PC-9 (cell line): ENCODE measurements at regions of chr6 and their contacts with region 1.

Region 1: DNA sequence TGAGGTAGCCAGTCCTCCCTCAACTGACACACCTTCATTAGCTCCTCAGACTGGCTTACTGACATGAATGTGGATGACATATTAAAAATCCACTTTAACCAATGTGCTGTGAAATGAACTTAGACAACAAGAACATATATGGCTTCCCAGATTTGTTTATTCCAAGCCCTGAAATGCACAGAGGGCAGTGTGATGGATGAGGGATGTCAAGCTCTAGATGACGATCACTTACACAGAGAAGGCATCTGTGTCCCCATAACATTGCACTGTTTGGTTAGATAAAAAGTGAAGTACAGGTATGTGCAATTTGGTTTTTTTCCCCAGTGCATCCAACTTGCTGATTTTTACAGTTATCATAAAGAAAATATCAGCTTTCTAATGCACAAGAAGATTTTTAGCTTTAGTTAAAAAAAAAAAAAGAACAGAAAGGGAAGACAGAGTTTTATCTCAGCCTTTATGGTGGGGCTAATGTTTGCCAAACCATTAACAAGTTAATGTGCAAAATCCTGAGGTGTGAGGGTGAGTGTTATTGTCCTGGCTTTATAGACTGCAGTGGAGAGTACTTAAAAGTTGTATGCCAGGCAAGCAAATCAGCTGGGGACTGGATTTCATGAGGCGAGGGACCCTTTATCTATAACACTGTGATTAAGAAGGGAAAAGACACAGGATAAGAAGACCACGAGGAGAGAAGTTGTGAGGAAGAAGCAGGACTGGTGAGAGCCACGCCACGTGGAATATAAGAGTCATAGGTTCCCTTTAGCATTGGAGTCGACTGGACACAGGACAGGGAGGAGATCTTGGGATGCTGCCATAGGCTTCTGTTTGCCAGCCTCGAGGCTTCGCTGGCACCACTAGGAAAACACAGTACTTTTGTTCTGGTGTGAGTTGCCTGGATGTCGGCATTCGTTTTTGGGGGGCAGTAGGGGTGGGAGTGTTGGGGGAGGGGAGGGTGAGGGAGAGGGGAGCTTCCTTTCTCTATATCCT is 90.0 kb upstream of the BACH2 start:
- DNase-seq: no peak
- H3K4me3 ChIP-seq: no peak overlapping the region
- H3K27ac ChIP-seq: no peak overlapping the region
- H3K4me1 ChIP-seq: no peaks in the 10 kb centered on the region
- H3K27me3 ChIP-seq: no peaks in the 10 kb centered on the region
- CTCF ChIP-seq: no peak

Region 2: GRCh38 chr6:90274451-90275030 is 112.2 kb before region 1 on chr6:
- CTCF ChIA-PET with region 1: no interaction called
- POLR2A ChIA-PET with region 1: no interaction called
- intact Hi-C with region 1: no loop called
- DNase-seq: no peak
- H3K4me3 ChIP-seq: no peak overlapping the region
- H3K27ac ChIP-seq: no peak overlapping the region
- H3K4me1 ChIP-seq: no peaks in the 10 kb centered on the region
- H3K27me3 ChIP-seq: no peaks in the 10 kb centered on the region
- CTCF ChIP-seq: no peak

Region 3: DNA sequence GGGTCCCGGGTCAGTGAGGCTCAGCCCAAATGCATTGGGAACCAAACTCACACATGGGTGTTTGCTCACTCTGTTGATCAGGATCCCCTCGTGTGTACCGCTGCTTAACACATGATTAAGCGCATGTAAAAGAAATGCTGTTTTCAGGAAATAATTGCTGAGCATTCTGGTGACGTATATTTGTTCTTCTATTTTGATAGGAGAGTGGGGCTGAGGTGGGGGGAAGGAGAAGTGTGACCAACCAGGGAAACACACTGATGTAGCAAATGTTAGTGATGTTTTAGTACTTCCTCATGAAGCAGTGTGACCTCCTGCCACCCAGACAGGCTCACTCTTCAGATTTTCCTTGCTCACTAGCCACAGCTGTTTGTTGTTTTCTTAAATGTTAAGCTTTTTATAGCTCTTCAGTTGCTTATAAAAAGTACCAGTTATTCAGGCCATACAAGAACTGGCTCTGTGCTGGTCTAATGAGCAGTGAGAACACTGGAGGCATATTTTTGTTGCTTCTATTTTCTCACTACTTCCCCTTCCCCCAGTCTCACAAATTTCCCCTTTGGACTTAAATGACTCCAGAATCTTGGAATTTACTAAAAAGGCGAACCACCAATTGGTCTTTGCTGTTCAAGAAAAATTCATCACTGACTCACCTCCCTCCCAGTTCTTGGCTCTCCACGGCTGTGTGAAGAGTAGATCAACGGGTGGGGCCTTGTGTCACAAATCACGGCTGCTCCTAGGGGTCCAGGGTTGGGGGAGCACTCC is 10.8 kb before region 1 on chr6:
- CTCF ChIA-PET with region 1: no interaction called
- POLR2A ChIA-PET with region 1: interaction called, 14 read pairs
- intact Hi-C with region 1: no loop called
- DNase-seq: no peak
- H3K4me3 ChIP-seq: no peak overlapping the region
- H3K27ac ChIP-seq: no peak overlapping the region
- H3K4me1 ChIP-seq: no peaks in the 10 kb centered on the region
- H3K27me3 ChIP-seq: no peaks in the 10 kb centered on the region
- CTCF ChIP-seq: no peak